GM13976 (cell line): ENCODE measurements at regions of chr3 and their contacts with region 1.

Region 1: DNA sequence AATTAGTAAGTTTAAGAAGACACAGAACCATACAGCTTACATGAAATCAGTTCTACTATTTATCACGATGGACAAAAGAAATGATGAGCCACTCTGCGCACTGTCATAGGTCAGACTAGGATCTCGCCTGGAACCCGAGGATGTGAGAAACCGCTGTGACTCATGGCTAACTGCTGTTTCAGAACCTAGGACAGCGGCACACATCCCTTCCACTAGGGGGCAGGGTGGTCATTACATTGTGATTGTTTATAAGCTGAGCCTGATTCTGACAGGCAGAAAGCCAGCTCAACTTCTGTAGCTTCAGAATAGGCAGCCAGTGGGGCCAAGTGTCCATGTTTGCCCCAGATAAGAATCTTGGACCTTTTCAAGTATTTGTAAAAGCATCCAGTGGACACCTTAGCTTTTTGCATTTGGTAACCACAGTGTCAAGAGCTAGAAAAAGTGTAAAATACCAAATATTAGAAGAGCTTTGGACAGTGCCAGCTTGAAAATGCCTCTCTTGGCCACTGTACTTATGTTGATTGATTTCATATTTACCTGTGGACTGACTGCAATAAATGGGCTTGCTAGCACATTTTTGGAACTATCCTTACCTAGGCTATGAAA is 115.8 kb downstream of the KBTBD8 start:
- DNase-seq: peak; percentile 54
- CTCF ChIP-seq: peak; percentile 96

Region 2: DNA sequence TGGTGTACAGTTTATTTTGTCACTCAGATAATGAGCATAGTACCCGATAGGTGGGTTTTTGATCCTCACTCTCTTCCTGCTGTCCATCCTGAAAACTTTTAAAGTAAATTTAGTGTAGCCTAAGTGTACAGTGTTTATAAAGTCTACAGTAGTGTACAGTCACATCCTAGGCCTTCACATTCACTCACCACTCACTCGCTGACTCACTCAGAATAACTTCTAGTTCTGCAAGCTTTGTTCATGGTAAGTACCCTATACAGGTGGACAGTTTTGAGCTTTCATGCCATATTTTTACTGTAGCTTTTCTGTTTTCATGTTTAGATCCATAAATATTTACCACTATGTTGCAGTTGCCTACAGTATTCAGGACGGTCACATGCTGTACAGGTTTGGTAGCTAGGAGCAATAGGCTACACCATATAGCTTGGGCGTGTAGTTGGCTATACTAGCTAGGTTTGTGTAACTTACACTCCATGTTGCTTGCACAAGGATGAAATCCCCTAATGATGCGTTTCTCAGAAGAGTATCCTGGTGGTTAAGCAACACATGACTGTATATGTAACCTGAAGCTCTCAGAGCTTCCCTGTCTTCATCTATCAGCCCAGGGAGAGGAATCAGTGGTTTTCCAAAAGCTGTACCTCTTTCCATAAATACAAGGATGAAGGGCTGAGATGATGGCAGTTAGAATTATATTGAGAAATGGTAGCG is 980.7 kb before region 1 on chr3:
- in situ Hi-C with region 1: no loop called
- DNase-seq: no peak
- CTCF ChIP-seq: no peak

Region 3: DNA sequence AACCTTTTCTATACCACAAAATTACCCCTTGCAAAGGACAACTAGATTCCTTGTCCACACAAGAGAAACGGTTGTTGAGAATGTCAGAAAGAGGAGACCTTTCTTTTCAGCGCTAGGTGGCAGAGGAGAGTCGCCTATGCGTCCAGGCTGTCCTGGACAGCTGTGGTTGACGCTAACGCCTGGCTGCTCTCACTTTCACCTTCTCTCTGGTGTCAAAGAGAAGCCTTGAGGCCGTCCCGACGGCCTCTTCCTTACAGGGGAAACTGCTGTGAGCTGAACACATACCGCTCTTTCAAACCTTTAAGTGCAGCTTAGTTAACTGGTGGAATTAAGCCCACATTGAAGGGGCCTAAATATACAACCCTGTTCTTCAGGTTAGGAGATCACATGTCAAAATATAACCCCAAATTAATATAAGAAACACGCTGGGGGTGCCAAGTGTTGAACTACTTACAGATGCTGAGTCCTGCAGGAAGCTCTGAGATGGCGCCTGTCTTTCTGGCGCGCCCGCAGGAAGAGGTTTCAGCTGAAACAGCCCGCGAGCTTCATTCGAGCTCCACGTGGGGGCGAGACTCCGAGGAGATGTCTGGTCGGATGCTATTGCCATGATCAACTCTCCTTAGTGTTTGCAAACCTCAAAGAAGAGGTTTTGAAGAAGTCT is 141.9 kb before region 1 on chr3:
- in situ Hi-C with region 1: loop called (anchors 10 kb)
- DNase-seq: peak; percentile 84
- CTCF ChIP-seq: peak; percentile 75

Region 4: DNA sequence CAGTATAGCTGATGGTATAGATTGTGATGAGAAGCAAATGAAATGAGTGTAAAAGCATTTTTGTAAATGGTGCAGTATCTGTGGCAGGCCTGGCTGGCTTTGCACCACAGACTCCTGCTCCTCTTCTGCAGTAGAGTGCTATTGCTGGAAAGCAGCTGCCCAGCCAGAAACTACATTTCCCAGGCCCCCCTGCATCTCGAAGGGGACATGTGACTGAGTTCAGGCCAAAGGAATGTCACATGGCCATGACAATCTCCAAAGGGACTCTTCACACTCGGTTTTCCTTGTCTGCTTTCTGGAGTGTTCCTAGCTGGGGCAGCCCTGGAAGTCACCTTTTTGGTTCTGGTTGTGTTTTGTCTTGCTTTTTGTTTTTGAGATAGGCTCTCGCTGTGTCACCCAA is 263.4 kb after region 1 on chr3:
- in situ Hi-C with region 1: loop called (anchors 10 kb)
- DNase-seq: no peak
- CTCF ChIP-seq: no peak

Region 5: DNA sequence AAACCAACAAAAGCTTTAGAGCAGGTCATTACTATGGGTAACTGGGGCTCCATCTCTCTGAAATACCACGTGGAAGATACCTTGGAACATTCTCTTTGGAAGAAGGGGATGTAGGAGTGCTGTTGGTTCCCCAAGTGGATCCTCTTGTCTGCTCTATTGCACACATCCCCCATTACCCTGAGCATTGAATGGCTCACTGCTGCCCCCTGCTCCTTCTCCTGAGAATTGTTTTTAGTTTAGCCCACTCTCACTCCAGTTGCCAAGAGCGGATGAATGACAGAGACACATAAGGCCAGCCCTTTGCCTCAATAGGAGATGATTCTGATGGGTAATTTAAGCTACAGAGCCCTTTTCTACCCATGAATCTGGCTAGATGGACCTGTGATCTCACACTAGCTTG is 676.1 kb after region 1 on chr3:
- in situ Hi-C with region 1: loop called (anchors 25 kb)
- DNase-seq: peak; percentile 36
- CTCF ChIP-seq: peak; percentile 66

Region 6: GRCh38 chr3:68876112-68876713 is 1762.3 kb after region 1 on chr3:
- in situ Hi-C with region 1: loop called (anchors 25 kb)
- DNase-seq: peak; percentile 26
- CTCF ChIP-seq: peak; percentile 70